GM10248 (cell line): ENCODE measurements at regions of chr3 and their contacts with region 1.

Region 1: GRCh38 chr3:130527426-130527825 is 10.4 kb downstream of the COL6A6 start:
- DNase-seq: no peak
- CTCF ChIP-seq: no peak

Region 2: GRCh38 chr3:130258532-130258952 is 268.9 kb before region 1 on chr3:
- CTCF ChIA-PET with region 1: no interaction called
- POLR2A ChIA-PET with region 1: no interaction called
- DNase-seq: no peak
- CTCF ChIP-seq: no peak

Region 3: GRCh38 chr3:130539005-130539404 is 11.6 kb after region 1 on chr3:
- CTCF ChIA-PET with region 1: interaction called, 10 read pairs
- POLR2A ChIA-PET with region 1: no interaction called
- DNase-seq: peak; percentile 32
- CTCF ChIP-seq: peak; percentile 42